ENCODE measurements at regions of chr5 and their contacts with region 1.

Region 1: GRCh38 chr5:100479079-100479688 is 56.0 kb upstream of the FAM174A start:
- DNase-seq: peak in 1 of 2 experiments; percentile 46
- H3K4me3 ChIP-seq: no peak overlapping the region
- H3K4me3 Mint-ChIP-seq: no peak overlapping the region
- H3K27ac Mint-ChIP-seq: no peak overlapping the region
- H3K4me1 ChIP-seq: no peaks in the 10 kb centered on the region
- H3K4me1 Mint-ChIP-seq: no peaks in the 10 kb centered on the region
- H3K27me3 ChIP-seq: no peaks in the 10 kb centered on the region
- H3K27me3 Mint-ChIP-seq: no peaks in the 10 kb centered on the region
- CTCF ChIP-seq: peak; percentile 60 to 73

Region 2: GRCh38 chr5:100430268-100431195 is 48.7 kb before region 1 on chr5:
- CTCF ChIA-PET with region 1: no interaction called
- POLR2A ChIA-PET with region 1: no interaction called
- intact Hi-C with region 1: no loop called
- DNase-seq: peak; percentile 42 to 63
- H3K4me3 ChIP-seq: no peak overlapping the region
- H3K4me3 Mint-ChIP-seq: no peak overlapping the region
- H3K27ac Mint-ChIP-seq: no peak overlapping the region
- H3K4me1 ChIP-seq: no peaks in the 10 kb centered on the region
- H3K4me1 Mint-ChIP-seq: no peaks in the 10 kb centered on the region
- H3K27me3 ChIP-seq: no peaks in the 10 kb centered on the region
- H3K27me3 Mint-ChIP-seq: no peaks in the 10 kb centered on the region
- CTCF ChIP-seq: peak; percentile 76 to 94

Region 3: GRCh38 chr5:100520348-100520747 is 41.2 kb after region 1 on chr5:
- CTCF ChIA-PET with region 1: no interaction called
- POLR2A ChIA-PET with region 1: no interaction called
- intact Hi-C with region 1: loop called (anchors 1 kb)
- DNase-seq: no peak
- H3K4me3 ChIP-seq: no peak overlapping the region
- H3K4me3 Mint-ChIP-seq: no peak overlapping the region
- H3K27ac Mint-ChIP-seq: no peak overlapping the region
- H3K4me1 ChIP-seq: no peaks in the 10 kb centered on the region
- H3K4me1 Mint-ChIP-seq: no peaks in the 10 kb centered on the region
- H3K27me3 ChIP-seq: no peaks in the 10 kb centered on the region
- H3K27me3 Mint-ChIP-seq: peaks cover 6% of the 10 kb centered on the region
- CTCF ChIP-seq: peak in 1 of 2 experiments; percentile 9

Region 4: GRCh38 chr5:100708692-100709091 is 229.5 kb after region 1 on chr5:
- CTCF ChIA-PET with region 1: no interaction called
- POLR2A ChIA-PET with region 1: no interaction called
- intact Hi-C with region 1: no loop called
- DNase-seq: no peak
- H3K4me3 ChIP-seq: no peak overlapping the region
- H3K4me3 Mint-ChIP-seq: no peak overlapping the region
- H3K27ac Mint-ChIP-seq: no peak overlapping the region
- H3K4me1 ChIP-seq: no peaks in the 10 kb centered on the region
- H3K4me1 Mint-ChIP-seq: no peaks in the 10 kb centered on the region
- H3K27me3 ChIP-seq: no peaks in the 10 kb centered on the region
- H3K27me3 Mint-ChIP-seq: no peaks in the 10 kb centered on the region
- CTCF ChIP-seq: no peak

Region 5: DNA sequence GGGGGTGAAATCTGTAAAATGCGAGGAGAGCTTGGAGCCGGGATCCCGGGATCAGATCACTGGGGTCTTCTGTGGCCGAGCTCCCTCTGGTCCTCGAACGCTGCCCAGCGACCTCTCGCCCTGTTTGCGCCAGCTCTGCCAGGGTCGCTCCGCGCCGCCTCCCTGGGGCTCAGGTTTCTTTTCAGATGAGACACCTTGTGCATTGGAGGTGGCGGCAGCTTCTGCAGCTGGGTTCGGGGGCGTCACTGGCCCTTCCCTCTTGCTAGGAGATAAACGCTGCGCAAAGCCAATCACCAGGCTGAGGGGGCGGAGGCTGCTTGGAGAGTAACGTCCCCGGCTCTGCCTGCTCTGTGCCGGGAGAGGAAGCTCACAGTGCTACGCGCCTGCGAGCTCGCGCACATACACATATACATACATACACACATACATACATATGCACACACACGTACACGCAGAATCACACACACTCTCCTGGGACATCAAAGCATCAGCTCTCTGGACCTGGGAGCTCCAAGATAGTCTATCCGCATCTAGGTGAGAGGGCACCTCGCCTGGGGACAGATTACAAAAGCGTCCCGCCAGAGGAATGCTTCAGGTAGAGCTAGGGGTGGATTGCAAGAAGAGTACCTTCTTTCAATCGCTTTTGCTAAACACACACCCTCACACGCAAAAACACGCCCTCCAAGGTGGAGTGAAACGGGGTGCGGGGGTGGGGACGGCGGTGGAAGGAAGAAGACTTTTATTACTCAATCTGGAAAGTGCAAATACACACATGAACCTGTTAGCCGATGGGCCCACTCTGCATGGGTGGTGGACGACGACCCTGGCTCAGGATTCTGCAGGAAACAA is 424.1 kb after region 1 on chr5 and contains the start of gene ST8SIA4:
- CTCF ChIA-PET with region 1: no interaction called
- POLR2A ChIA-PET with region 1: no interaction called
- intact Hi-C with region 1: loop called (anchors 10 kb)
- DNase-seq: no peak
- H3K4me3 ChIP-seq: no peak within 1 kb of the TSS
- H3K4me3 Mint-ChIP-seq: peak within 1 kb of the TSS; percentile 29
- H3K27ac Mint-ChIP-seq: no peak within 1 kb of the TSS
- H3K4me1 ChIP-seq: 0 out of 2 replicates have a peak, but pooled peaks cover 4% of the 10 kb centered on the region
- H3K4me1 Mint-ChIP-seq: no peaks in the 10 kb centered on the region
- H3K27me3 ChIP-seq: no peaks in the 10 kb centered on the region; the same call in 1 of the 2 replicates
- H3K27me3 Mint-ChIP-seq: peaks cover 2% of the 10 kb centered on the region
- CTCF ChIP-seq: no peak
- total RNA-seq, gene ST8SIA4: 0.61 and 0.72 TPM in 2 replicates

Region 6: GRCh38 chr5:101045689-101046088 is 566.5 kb after region 1 on chr5:
- CTCF ChIA-PET with region 1: no interaction called
- POLR2A ChIA-PET with region 1: no interaction called
- intact Hi-C with region 1: loop called (anchors 5 kb)
- DNase-seq: no peak
- H3K4me3 ChIP-seq: no peak overlapping the region
- H3K4me3 Mint-ChIP-seq: no peak overlapping the region
- H3K27ac Mint-ChIP-seq: no peak overlapping the region
- H3K4me1 ChIP-seq: no peaks in the 10 kb centered on the region
- H3K4me1 Mint-ChIP-seq: no peaks in the 10 kb centered on the region
- H3K27me3 ChIP-seq: no peaks in the 10 kb centered on the region
- H3K27me3 Mint-ChIP-seq: no peaks in the 10 kb centered on the region
- CTCF ChIP-seq: no peak

Region 7: GRCh38 chr5:101390151-101390908 is 911.1 kb after region 1 on chr5:
- CTCF ChIA-PET with region 1: no interaction called
- POLR2A ChIA-PET with region 1: no interaction called
- intact Hi-C with region 1: loop called (anchors 1 kb)
- DNase-seq: peak; percentile 39 to 69
- H3K4me3 ChIP-seq: no peak overlapping the region
- H3K4me3 Mint-ChIP-seq: no peak overlapping the region
- H3K27ac Mint-ChIP-seq: peak overlapping the region; percentile 24
- H3K4me1 ChIP-seq: no peaks in the 10 kb centered on the region
- H3K4me1 Mint-ChIP-seq: no peaks in the 10 kb centered on the region
- H3K27me3 ChIP-seq: no peaks in the 10 kb centered on the region
- H3K27me3 Mint-ChIP-seq: no peaks in the 10 kb centered on the region
- CTCF ChIP-seq: peak; percentile 49 to 75

Region 8: DNA sequence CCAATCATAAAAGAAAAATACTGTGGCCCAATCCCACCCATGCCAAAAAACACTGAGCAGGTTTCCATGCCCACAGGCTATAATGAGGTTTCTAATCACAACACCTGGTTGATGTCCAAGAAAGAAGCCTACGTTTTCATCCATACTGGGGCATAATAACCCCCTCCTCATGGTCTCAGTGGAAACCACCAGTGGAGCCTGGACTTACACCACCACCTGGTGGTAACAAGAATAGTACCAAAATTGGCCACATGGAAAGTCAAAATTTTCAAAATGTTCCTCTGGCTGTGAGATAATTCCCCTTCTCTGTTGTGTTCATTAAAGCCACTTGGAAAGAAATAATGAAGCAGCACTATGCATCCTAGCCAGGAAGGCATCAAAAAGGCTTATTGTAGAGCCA is 1111.2 kb after region 1 on chr5:
- CTCF ChIA-PET with region 1: no interaction called
- POLR2A ChIA-PET with region 1: no interaction called
- intact Hi-C with region 1: loop called (anchors 1 kb)
- DNase-seq: peak in 1 of 2 experiments; percentile 13
- H3K4me3 ChIP-seq: no peak overlapping the region
- H3K4me3 Mint-ChIP-seq: no peak overlapping the region
- H3K27ac Mint-ChIP-seq: no peak overlapping the region
- H3K4me1 ChIP-seq: no peaks in the 10 kb centered on the region
- H3K4me1 Mint-ChIP-seq: no peaks in the 10 kb centered on the region
- H3K27me3 ChIP-seq: no peaks in the 10 kb centered on the region
- H3K27me3 Mint-ChIP-seq: no peaks in the 10 kb centered on the region
- CTCF ChIP-seq: peak; percentile 39 to 41